PC-9 (cell line): ENCODE measurements at regions of chr9 and their contacts with region 1.

Region 1: DNA sequence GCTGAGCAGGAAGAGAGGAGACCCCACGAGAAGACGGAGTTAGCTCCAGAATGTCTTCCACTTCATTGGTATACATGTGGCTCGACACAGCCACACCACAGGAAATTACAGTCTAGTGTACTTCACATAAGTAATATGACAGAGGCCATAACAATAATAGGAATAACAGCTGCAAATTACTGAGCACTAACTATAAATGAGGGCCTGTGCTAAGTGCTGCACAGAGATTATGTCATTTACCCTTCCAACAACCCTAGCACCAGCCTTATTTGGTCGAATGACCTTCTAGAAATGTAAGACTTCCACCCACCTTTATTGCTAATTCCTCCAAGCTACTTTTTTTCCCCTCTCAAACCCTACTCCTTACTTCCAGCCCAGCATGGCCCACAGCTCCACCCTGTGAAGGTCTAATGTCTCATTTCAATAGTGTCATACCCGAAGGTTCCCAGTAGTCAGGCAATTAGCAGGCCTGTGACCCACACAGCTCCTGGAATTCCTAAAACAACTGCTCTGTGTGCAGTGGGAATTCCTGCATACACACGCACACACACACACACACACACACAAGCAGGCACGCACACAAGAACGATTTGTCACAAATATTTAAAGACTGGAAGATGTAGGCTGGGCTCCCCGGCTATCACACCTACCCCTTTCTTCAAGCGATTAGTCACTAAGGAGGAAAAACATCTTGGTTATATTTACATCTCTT is 134.5 kb downstream of the FRMD3 start:
- DNase-seq: no peak
- H3K4me3 ChIP-seq: no peak overlapping the region
- H3K27ac ChIP-seq: no peak overlapping the region
- H3K4me1 ChIP-seq: no peaks in the 10 kb centered on the region
- H3K27me3 ChIP-seq: no peaks in the 10 kb centered on the region
- CTCF ChIP-seq: no peak

Region 2: DNA sequence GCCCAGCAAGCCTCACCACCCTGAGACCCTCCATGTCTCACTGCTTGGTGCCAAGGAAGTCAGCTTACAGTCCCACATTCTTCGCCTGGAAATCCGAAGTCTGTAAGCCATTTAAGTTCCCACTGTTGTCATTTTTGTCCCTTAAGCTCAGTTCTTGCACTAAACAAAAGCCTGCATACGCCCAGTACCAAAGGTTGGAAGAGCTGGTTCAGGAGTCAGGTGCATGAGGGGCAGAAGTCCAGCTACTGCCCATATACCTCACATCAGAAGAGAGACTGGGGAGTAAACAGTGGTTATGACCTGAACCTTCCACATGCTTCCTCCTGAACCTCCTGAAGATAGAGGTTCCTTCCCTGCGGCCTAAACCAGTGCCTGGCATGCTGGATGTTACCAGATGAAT is 11.5 kb before region 1 on chr9:
- CTCF ChIA-PET with region 1: no interaction called
- POLR2A ChIA-PET with region 1: interaction called, 14 read pairs
- intact Hi-C with region 1: no loop called
- DNase-seq: no peak
- H3K4me3 ChIP-seq: no peak overlapping the region
- H3K27ac ChIP-seq: no peak overlapping the region
- H3K4me1 ChIP-seq: no peaks in the 10 kb centered on the region
- H3K27me3 ChIP-seq: no peaks in the 10 kb centered on the region
- CTCF ChIP-seq: no peak